MCF 10A (cell line): ENCODE measurements at regions of chr15 and their contacts with region 1.

Region 1: DNA sequence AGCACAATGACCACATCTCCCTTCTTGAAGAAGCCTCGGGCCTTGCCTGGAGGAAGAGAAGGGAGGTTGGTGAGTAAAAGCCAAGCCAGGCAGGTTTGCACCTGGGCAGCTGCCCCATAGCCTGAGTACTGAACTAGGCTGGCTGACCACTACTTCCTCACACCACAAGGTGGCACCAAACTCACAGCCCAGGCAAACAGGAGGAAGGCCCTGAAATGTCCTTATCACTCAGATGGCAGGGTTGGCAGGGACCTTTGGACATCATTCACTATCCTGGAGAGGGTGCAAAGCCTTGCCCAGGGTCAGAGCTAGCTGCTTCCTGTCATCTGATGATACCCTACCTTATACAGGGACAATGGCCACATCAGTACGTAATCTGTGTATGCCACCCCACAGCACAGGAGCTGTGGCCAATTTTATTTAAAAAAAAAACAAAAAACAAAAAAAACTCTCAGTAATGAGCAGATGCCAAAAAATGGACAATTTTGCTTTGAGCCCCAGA is 2.2 kb upstream of the GRAMD2A start:
- DNase-seq: peak; percentile 86
- H3K4me3 Mint-ChIP-seq: no peak overlapping the region
- H3K27ac Mint-ChIP-seq: no peak overlapping the region
- H3K4me1 Mint-ChIP-seq: peaks cover 38% of the 10 kb centered on the region
- H3K27me3 Mint-ChIP-seq: no peaks in the 10 kb centered on the region
- CTCF ChIP-seq: peak; percentile 85

Region 2: GRCh38 chr15:71679223-71680053 is 520.3 kb before region 1 on chr15:
- CTCF ChIA-PET with region 1: no interaction called
- POLR2A ChIA-PET with region 1: no interaction called
- intact Hi-C with region 1: no loop called
- DNase-seq: no peak
- H3K4me3 Mint-ChIP-seq: no peak overlapping the region
- H3K27ac Mint-ChIP-seq: no peak overlapping the region
- H3K4me1 Mint-ChIP-seq: peaks cover 20% of the 10 kb centered on the region
- H3K27me3 Mint-ChIP-seq: no peaks in the 10 kb centered on the region
- CTCF ChIP-seq: no peak

Region 3: DNA sequence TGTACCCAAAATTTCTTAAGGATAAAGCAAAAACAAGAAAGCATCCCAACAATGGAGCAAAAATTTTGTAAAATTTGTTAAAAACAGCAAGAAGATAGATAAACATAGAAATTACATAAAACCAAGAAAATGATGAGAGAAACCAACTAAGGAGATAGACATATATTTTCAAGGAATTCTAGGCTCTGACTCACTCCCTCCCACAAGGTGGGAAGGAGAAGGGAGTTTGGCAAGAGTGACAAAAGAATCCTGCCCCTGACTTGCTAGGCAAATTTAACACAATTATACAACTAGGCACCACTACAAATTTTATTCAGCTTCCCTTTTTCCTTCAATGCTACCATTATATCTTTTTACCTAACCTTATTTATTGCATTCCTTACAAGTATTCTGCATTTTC is 152.7 kb before region 1 on chr15:
- CTCF ChIA-PET with region 1: no interaction called
- POLR2A ChIA-PET with region 1: no interaction called
- intact Hi-C with region 1: no loop called
- DNase-seq: peak; percentile 40
- H3K4me3 Mint-ChIP-seq: no peak overlapping the region
- H3K27ac Mint-ChIP-seq: no peak overlapping the region
- H3K4me1 Mint-ChIP-seq: peaks cover 15% of the 10 kb centered on the region
- H3K27me3 Mint-ChIP-seq: no peaks in the 10 kb centered on the region
- CTCF ChIP-seq: no peak

Region 4: DNA sequence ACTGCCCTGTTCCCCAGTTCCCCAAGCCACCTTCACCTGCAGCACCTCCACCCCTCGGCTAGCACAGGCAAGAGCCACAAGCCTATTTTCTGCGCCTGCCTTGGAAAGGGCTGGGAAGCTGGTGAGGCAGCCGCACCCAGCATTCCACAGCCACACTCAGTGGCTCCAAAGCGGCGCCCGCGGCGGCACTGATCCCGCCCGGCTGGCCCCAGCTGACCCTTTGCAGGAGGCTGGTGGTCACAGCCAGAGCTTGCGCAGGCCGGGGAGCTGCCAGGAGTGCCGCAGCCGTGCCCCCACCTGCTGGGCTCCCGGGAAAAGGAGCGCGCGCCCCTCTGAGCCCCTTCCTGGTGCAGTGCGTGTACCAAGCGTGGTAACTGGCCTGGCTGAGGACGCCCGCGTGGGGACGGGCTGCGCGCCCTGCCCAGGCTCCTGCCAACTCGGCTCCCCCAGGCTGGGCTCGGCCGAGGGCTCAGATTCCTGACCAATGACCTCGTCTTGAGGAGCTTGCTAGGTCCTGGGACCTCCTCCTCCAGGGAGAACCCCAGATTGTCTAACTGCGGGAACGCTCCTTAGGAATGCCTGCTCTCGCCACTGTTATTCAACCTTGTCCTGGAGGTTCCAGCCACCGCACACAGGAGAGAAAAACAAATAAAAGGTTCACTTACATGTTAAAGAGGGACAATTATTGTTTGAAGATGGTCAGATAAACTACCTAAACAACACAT is 15.4 kb before region 1 on chr15:
- CTCF ChIA-PET with region 1: interaction called, 7 read pairs
- POLR2A ChIA-PET with region 1: interaction called, 50 read pairs
- intact Hi-C with region 1: no loop called
- DNase-seq: peak; percentile 65
- H3K4me3 Mint-ChIP-seq: peak overlapping the region; percentile 38
- H3K27ac Mint-ChIP-seq: no peak overlapping the region
- H3K4me1 Mint-ChIP-seq: peaks cover 26% of the 10 kb centered on the region
- H3K27me3 Mint-ChIP-seq: no peaks in the 10 kb centered on the region
- CTCF ChIP-seq: no peak

Region 5: GRCh38 chr15:72222259-72222832 is 22.6 kb after region 1 on chr15:
- CTCF ChIA-PET with region 1: interaction called, 29 read pairs
- POLR2A ChIA-PET with region 1: interaction called, 424 read pairs
- intact Hi-C with region 1: loop called (anchors 2 kb)
- DNase-seq: peak; percentile 98
- H3K4me3 Mint-ChIP-seq: peak overlapping the region; percentile 67
- H3K27ac Mint-ChIP-seq: peak overlapping the region; percentile 71
- H3K4me1 Mint-ChIP-seq: peaks cover 58% of the 10 kb centered on the region
- H3K27me3 Mint-ChIP-seq: no peaks in the 10 kb centered on the region
- CTCF ChIP-seq: no peak

Region 6: DNA sequence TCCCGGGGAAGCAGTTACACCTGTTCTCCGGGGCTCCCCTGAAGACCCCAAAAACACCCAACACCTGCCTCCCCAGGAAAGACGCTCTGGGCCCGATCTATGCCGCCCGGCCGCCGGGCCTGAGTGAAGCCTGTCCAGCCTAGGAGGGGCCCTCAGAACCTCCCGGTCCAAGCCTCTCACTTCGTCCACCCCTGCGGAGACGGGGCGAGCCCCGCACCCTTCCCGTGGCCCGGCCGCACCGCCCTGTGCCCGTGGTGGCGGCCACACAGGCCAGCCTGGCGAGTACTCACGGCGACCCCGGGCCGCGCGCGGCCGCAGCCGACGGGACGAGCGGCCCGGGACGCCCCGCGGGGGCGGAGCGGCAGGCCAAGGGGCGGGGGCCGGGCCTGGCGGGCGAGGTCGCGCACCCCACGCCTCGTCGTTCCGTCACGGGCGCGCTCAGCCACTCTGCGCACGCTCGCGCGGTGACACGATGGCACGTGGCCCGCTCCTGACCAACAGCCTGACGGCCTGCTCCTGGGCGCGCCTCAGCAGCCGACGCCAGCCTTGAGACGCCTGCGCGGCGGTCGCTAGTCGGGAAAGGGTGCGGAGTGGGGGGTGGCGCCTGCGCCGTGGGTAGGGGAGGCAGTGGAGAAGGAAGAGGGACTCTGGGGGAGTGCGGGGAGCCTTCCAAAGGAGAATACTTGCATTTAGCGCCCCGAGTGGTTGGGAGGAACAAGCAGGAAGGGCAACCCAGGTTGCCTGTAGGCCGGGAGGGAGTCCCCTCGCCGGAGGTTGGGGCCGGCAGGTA is 72.6 kb after region 1 on chr15 and contains the start of gene PARP6:
- CTCF ChIA-PET with region 1: interaction called, 12 read pairs
- POLR2A ChIA-PET with region 1: interaction called, 12 read pairs
- intact Hi-C with region 1: loop called (anchors 1 kb)
- DNase-seq: peak; percentile 96
- H3K4me3 Mint-ChIP-seq: peak within 1 kb of the TSS; percentile 80
- H3K27ac Mint-ChIP-seq: peak within 1 kb of the TSS; percentile 86
- H3K4me1 Mint-ChIP-seq: peaks cover 20% of the 10 kb centered on the region
- H3K27me3 Mint-ChIP-seq: no peaks in the 10 kb centered on the region
- CTCF ChIP-seq: peak; percentile 53
- total RNA-seq, gene PARP6: 117 TPM in 2 replicates